Activated CD4-positive, alpha-beta T cell treated with anti-CD3 and anti-CD28 coated beads, Interleukin-2, amount 10 ng/mL, durations not matched to agents 24 days and 14 days (primary cell): ENCODE measurements at regions of chr1 and their contacts with region 1.

Region 1: GRCh38 chr1:111628153-111628552 is 8.6 kb downstream of the RAP1A start:
- DNase-seq: no peak
- H3K4me3 Mint-ChIP-seq: peak overlapping the region; percentile 73
- H3K27ac Mint-ChIP-seq: peak overlapping the region; percentile 89
- H3K4me1 Mint-ChIP-seq: peaks cover 70% of the 10 kb centered on the region
- H3K27me3 Mint-ChIP-seq: no peaks in the 10 kb centered on the region

Region 2: DNA sequence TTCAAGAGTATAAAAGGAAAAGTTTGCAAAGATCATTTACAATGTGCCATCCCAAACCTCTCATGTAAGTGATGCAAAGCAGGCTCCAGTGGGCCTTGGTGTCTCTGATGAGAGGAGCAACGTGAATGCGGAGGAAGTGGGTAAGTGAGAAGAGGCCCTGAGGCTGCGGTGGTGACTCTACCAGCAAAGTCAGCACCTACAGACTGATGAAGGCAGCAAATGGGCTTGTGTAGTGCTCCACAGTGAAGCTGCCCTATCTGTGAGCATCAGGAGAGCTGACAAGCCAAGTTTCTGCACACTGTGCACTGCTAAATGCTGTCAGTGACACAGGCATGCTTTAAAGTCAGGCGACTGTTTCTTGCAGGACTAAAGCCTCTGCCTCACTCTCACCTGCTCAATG is 24.2 kb before region 1 on chr1:
- intact Hi-C with region 1: loop called (anchors 1 kb)
- DNase-seq: peak; percentile 94
- H3K4me3 Mint-ChIP-seq: peak overlapping the region; percentile 87
- H3K27ac Mint-ChIP-seq: peak overlapping the region; percentile 98
- H3K4me1 Mint-ChIP-seq: peaks cover 66% of the 10 kb centered on the region
- H3K27me3 Mint-ChIP-seq: no peaks in the 10 kb centered on the region

Region 3: DNA sequence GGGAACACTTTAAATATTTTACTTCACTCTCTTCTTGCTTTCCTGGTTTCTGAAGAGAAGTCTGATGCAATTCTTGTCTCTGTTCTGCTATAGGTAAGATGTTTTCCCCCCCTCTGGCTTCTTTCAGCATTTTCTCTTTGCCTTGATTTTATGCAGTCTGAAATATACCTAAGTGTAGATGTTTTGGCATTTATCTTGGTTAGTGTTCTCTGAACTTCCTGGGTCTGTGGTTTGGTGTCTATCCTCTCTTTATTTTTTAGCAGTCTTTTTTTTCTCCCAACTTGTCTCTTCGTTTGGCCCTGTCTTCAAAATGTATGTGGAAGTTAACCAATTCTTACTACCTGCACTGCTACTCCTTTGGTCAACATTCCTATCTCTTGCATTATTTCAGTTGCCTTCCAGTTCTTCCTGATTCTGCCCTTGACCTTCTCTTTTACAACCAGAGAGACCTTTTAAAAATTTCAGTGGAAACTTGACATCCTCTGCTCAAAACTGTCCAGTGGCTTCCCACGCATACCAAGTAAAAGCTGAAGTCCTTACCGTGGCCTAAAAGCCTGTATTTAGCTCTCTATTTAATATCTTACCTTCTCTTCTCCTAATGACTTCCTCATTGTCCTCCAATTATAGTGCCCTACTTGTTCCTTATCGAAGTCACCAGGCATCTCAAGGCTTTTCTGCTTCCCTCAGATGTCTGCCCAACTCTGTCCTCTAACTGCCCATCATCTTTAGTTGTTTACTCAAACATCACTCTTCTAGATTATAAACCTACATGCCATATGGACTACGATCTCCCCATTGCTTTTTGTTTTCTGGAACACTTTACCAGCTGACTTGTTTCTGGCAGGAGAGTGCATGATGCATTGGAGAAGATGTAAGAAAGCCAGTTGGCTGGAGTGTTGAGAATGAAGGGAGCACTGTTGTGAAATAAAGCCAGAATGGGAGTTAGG is 32.3 kb after region 1 on chr1:
- intact Hi-C with region 1: loop called (anchors 5 kb)
- DNase-seq: peak; percentile 63
- H3K4me3 Mint-ChIP-seq: no peak overlapping the region
- H3K27ac Mint-ChIP-seq: no peak overlapping the region
- H3K4me1 Mint-ChIP-seq: peaks cover 44% of the 10 kb centered on the region
- H3K27me3 Mint-ChIP-seq: no peaks in the 10 kb centered on the region

Region 4: GRCh38 chr1:112472142-112472541 is 844.0 kb after region 1 on chr1:
- intact Hi-C with region 1: no loop called
- DNase-seq: no peak
- H3K4me3 Mint-ChIP-seq: no peak overlapping the region
- H3K27ac Mint-ChIP-seq: no peak overlapping the region
- H3K4me1 Mint-ChIP-seq: no peaks in the 10 kb centered on the region
- H3K27me3 Mint-ChIP-seq: peaks cover 26% of the 10 kb centered on the region